ENCODE measurements at regions of chr16 and their contacts with region 1.

Region 1: GRCh38 chr16:8797364-8798173 is at the starts of genes PMM2 and TMEM186:
- DNase-seq: peak; percentile 94 to 95
- H3K4me3 ChIP-seq: peak within 1 kb of the TSS; percentile 76 to 99 (median 88)
- H3K27ac ChIP-seq: peak within 1 kb of the TSS; percentile 78 to 87
- H3K4me1 ChIP-seq: peaks cover 0 to 14% of the 10 kb centered on the region in 2 donors
- H3K27me3 ChIP-seq: no peaks in the 10 kb centered on the region
- CTCF ChIP-seq: no peak
- POLR2A ChIP-seq: no peak
- total RNA-seq, gene PMM2: 21.4 to 36.4 (median 33.8) TPM
- total RNA-seq, gene TMEM186: 7.2 to 9.4 (median 7.5) TPM

Region 2: GRCh38 chr16:8674413-8675022 is 123.1 kb before region 1 on chr16 and contains the start of gene ABAT:
- intact Hi-C with region 1: loop called (anchors 10 kb)
- DNase-seq: peak; percentile 88 to 91
- H3K4me3 ChIP-seq: peak within 1 kb of the TSS; percentile 62 to 76 (median 73)
- H3K27ac ChIP-seq: peak within 1 kb of the TSS; percentile 7 to 52
- H3K4me1 ChIP-seq: no peaks in the 10 kb centered on the region
- H3K27me3 ChIP-seq: no peaks in the 10 kb centered on the region
- CTCF ChIP-seq: no peak
- POLR2A ChIP-seq: peak; percentile 26
- total RNA-seq, gene ABAT: 7.5 to 12.6 (median 9.8) TPM